ENCODE measurements at regions of chr10 and their contacts with region 1.

Region 1: GRCh38 chr10:68550747-68551411 is 9.3 kb upstream of the TET1 start:
- DNase-seq: peak in 1 of 2 donors; percentile 41
- H3K4me3 ChIP-seq: no peak overlapping the region
- H3K27ac ChIP-seq: no peak overlapping the region
- H3K4me1 ChIP-seq: no peaks in the 10 kb centered on the region
- H3K27me3 ChIP-seq: no peaks in the 10 kb centered on the region
- CTCF ChIP-seq: peak; percentile 73 to 82

Region 2: DNA sequence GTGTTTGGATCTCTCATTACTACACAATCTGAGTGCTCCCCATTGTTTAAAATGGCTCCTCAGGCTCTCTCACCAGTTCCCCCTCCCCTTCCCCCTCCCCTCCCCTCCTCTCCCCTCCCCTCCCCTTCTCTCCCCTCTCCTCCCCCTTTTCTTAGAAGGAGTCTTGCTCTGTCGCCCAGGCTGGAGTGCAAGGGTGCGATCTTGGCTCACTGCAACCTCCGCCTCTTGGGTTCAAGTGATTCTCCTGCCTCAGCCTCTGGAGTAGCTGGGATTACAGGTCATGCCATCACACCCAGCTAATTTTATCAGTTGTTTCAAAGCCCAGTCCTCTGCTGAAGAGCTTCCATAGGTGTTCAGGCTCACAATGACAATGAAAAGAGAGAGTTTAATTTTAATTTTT is 166.6 kb after region 1 on chr10:
- intact Hi-C with region 1: loop called (anchors 5 kb)
- DNase-seq: no peak
- H3K4me3 ChIP-seq: no peak overlapping the region
- H3K27ac ChIP-seq: no peak overlapping the region
- H3K4me1 ChIP-seq: peaks cover 0 to 5% (median 1%) of the 10 kb centered on the region in 4 donors
- H3K27me3 ChIP-seq: no peaks in the 10 kb centered on the region
- CTCF ChIP-seq: no peak

Measured in tibial artery (tissue), 4 donors.